ENCODE measurements at regions of chr16 and their contacts with region 1.

Region 1: DNA sequence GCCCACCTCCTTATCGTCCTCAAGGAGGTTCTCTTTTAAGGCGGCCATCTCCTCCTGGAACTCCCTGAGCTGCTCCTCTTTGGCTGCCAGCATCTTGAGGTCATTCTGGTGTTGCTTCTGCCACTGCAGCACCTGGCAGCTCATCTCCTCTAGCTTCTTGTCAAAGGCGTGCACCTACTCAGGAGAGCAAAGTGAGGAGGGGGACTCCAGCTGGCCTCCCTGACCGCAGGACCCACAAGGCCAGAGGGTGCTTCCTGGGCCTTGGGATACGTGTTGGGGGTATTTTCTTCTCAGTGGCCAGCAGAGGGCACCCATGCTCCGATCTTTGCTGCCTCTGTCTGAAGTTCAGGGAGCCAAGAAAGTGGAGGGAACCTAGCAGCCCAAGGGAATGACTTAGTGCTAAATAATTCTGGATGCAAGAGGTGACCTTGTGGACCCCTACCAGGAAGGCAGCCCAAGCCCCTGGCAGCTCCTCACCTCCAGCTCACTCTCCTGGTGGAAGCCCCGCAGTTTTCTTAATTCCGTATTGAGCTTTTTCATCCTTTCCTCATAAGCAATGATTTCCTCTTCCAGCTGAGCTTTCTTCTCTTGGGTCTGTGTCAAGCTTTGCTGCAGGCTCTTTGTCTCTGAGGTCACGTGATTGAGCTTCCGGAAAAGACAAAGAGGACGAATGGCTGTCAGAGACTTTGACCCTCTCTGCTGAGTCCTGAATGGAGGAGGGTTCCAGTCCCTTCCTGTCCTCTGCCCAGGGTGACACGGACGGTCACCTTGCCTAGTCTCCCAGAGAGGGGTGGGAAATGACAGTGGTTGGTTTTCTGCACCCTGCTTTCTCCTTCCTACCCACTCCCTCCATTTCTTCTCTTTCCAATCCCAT is 31.4 kb downstream of the DHX38 start:
- DNase-seq: peak; percentile 40 to 82 (median 62)
- H3K4me3 ChIP-seq: peak overlapping the region in 25 of 59 donors; percentile 1 to 49 (median 23)
- H3K27ac ChIP-seq: peak overlapping the region in 46 of 59 donors; percentile 2 to 82 (median 64)
- H3K27me3 ChIP-seq: no peaks in the 10 kb centered on the region
- CTCF ChIP-seq: peak; percentile 55 to 92 (median 83)

Region 2: DNA sequence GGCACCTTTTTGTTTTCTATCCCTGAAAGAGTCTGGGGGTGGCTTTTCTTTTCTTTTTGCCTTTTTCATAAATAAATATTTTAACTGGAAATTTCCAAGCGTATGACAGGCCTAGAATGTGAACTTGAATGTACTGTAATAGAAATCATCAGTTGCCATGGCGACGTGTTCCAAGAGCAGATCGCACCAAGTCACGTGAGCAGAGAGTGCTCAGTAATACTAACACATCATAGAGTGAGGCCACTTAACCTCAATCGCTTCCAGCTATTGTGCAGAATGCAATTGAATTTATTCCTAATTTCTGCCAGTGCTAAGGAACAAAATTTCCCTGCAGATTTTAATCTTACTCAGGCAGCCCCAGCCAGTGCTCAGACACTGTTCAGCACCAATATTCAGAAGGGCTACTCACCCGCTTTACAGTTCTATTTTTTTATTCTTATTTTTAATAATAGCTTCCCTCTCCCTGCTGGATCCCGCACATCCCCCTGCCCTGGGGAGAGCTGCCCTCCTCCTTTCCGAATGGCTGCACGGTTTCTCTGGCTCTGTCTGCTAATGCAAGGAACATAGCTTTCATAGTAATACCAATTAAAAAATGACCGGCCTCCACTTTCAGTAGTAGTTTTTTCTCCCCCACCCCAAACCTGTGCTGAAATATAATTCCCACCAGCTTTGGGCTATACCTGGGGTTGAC is 73.2 kb after region 1 on chr16:
- intact Hi-C with region 1: loop called in 1 of 2 experiments (anchors 5 kb)
- DNase-seq: peak in 9 of 10 donors; percentile 38 to 91 (median 79)
- H3K4me3 ChIP-seq: peak overlapping the region in 47 of 59 donors; percentile 1 to 55 (median 29)
- H3K27ac ChIP-seq: peak overlapping the region in 57 of 59 donors; percentile 35 to 91 (median 78)
- H3K27me3 ChIP-seq: no peaks in the 10 kb centered on the region
- CTCF ChIP-seq: no peak

Region 3: GRCh38 chr16:72739577-72739976 is 614.6 kb after region 1 on chr16:
- intact Hi-C with region 1: no loop called
- DNase-seq: no peak
- H3K4me3 ChIP-seq: no peak overlapping the region
- H3K27ac ChIP-seq: no peak overlapping the region
- H3K27me3 ChIP-seq: no peaks in the 10 kb centered on the region
- CTCF ChIP-seq: no peak